Aorta (tissue), 5 donors: ENCODE measurements at regions of chr17 and their contacts with region 1.

Region 1: DNA sequence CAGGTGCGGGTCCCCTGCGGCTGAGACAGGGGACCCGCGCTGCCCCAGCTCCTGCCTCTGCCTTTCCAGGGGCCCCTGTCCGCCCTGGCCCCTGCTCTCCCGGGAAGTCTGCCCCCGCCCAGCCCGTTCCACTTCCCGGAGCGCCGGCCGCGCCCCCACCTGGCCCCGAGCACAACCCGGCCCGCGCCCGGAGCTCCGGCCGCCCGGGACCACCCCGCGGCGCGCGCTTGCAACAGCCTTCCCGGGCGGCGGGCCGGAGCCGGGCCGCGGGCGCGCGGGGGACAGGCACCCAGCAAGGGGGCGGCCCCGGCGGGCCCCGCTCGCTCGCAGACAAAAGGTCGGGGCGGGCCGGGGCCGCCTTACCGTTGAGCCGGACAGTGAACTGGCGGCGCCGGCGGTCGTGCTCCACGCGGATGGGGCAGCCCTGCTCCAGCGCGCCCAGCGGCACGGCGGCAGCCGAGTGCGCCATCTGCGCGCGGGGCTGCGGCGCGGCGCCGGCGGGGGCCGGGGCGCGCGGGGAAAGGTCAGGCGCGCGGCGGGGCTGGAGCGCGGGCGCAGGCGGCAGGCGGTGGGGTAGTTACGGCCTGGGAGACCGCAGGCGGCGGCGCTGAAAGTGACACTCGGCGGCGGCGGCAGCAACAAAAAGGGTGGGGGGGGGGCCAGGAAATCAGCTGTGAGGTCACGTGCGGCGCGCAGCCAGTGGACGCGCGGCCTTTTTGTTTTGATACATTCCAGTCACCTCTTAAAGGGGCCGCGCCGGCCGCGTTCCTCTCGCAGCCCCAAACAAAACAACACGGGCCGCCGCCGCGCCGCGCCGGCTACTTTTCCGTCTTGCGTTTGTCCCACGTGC is at the start of gene NATD1:
- DNase-seq: peak; percentile 94
- ATAC-seq: peak; percentile 81
- H3K4me3 ChIP-seq: peak within 1 kb of the TSS; percentile 86 to 95
- H3K27ac ChIP-seq: peak within 1 kb of the TSS in 1 of 2 donors; percentile 72
- H3K4me1 ChIP-seq: peaks cover 0 to 3% of the 10 kb centered on the region in 2 donors
- H3K27me3 ChIP-seq: no peaks in the 10 kb centered on the region
- total RNA-seq, gene NATD1: 7.2 to 13.4 TPM

Region 2: DNA sequence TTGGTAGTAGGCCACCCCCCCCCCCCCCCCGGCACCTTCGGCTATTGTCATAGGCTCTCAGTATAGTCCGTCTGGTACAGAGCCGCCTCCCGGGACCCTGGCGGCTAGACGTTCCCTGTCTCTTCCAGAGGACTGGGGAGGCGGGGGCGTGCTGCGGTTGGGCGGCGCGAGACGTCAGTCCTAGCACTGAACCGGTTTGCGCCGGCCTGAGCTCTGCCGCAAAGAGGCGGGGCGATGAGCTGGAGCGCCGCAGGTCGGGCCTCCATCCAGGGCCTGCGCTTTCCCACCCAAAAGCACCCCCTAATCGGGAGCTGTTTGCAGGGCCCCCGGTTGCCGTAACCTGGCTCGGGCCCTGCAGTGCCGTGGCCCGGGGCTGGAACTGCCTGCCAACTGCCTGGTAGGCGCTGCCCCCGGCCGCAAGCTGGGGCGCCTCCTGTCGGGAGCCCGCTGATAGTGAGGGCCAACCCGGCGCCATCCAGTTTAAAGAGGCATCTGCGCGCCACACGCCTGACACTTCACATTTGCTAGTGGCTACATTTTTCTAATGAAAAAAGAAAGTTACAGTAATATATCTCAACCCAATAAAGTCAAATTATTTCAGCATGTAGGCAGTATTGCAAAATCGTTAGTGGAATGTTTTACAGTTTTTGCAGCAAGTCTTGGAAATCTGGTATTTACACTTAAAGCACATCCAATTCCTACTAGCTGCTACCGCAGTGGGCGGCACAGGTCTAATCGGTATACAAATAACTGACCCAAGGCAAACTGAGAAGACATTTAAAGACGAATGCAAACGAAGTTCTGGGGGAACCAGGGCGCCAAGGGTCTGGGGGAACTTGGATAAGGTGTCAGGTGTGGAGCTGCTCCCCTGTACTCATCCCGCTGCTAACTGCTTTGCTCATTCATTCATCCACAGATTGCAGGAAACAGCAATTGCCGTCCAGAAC is 209.5 kb before region 1 on chr17:
- intact Hi-C with region 1: loop called in 1 of 2 experiments (anchors 10 kb)
- DNase-seq: peak; percentile 99 to 100
- ATAC-seq: peak; percentile 97
- H3K4me3 ChIP-seq: peak overlapping the region; percentile 23 to 83
- H3K27ac ChIP-seq: peak overlapping the region in 1 of 2 donors; percentile 84
- H3K4me1 ChIP-seq: peaks cover 0 to 2% of the 10 kb centered on the region in 2 donors
- H3K27me3 ChIP-seq: no peaks in the 10 kb centered on the region

Region 3: GRCh38 chr17:21275579-21276263 is 22.7 kb after region 1 on chr17:
- intact Hi-C with region 1: loop called in 1 of 2 experiments (anchors 1 kb)
- DNase-seq: peak; percentile 97 to 99
- ATAC-seq: peak; percentile 96
- H3K4me3 ChIP-seq: peak overlapping the region; percentile 44 to 69
- H3K27ac ChIP-seq: no peak overlapping the region
- H3K4me1 ChIP-seq: no peaks in the 10 kb centered on the region
- H3K27me3 ChIP-seq: no peaks in the 10 kb centered on the region